Posterior vena cava (tissue), 2 donors: ENCODE measurements at regions of chr3 and their contacts with region 1.

Region 1: GRCh38 chr3:189148081-189148507 is 23.7 kb upstream of the TPRG1 start:
- DNase-seq: no peak

Region 2: GRCh38 chr3:188962253-188963247 is 185.5 kb before region 1 on chr3:
- intact Hi-C with region 1: loop called in 1 of 2 experiments (anchors 10 kb)
- DNase-seq: no peak

Region 3: DNA sequence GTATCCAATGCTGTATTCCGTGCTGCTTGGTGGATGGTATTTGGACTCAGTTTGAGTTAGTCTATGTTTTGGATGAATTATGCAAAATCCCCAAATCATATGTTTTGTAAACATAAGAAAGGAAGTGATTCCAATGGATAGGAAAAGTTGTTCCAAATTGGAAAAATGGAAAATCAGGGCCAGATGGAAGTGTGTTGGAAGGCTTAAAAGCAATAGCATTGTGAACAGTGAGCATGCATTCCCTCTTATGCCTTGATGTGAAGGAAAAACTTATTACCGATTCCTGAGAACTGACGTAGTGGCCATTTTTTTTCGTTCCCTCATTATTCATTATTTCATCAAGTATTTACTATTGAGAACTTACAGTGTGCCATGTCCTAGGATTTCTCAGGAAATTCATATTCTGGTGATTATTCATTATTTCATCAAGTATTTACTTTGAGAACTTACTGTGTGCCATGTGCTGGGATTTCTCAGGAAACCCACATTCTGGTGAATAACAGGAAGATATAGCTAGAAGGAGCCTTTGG is 120.4 kb before region 1 on chr3:
- intact Hi-C with region 1: no loop called
- DNase-seq: no peak

Region 4: DNA sequence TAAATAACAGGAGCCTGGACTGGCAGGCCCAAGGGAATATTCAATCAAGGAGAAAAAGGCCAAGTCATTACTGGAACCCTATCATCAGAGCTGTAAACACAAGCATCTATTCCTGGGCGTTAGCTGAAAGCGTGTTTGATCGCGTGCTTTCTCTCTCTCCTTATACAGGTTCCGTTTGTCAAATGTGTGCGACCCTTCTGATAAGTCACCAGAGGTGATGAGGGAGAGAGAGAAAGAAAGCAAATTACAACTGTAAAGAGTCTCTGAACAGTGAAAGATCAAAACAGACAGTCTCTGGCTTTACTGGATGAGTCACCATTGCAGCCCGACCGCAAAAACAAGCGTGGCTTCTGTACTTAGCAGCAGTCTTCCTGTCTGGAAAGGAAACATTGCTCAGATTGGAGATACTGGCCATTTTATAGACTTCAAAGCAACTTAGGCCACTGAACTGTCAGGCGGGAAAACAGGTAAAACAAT is 15.8 kb before region 1 on chr3:
- intact Hi-C with region 1: no loop called
- DNase-seq: peak; percentile 88